Activated naive CD4-positive, alpha-beta T cell treated with anti-CD3 and anti-CD28 coated beads for 36 hours (primary cell): ENCODE measurements at regions of chr11 and their contacts with region 1.

Region 1: DNA sequence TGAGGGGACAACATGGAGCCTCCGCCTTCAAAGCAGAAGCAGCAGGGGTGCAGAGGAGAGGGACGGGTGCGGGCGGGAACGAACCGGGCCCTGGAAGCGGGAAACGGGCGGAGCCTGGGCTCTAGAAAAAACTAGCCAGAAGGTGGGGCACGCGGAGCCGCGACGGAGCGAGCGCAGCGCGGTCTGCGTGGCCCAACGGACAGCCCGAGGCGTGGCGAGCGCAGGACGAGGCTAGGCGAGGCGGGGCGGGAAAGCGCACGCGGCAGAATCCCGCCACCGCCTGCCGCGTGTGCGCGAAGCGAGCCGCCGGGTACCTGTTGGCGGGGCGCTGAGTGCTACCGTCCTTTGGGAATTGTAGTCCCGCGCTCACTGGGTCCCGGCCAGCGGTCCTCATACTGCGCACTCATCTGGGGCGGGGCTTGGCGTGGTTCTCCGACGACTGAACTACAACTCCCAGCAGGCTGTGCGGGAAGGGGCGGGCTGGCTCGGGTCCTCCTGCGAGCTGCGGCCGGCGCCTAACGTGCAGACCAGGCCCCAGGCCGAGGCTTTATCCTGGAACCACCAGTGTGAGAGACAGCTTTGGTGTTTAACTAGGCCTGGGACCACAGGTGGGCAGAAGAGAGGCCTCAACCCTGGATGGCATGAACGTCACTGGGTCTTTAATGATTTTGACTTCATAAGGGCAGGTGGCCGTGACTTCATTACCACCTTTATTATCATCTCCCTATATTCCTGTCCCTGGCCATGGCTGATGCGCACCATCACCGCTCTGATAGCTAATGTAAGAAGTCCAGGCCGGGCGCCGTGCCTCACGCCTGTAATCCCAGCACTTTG is at the start of gene ATL3:
- DNase-seq: peak; percentile 93
- H3K4me3 Mint-ChIP-seq: peak within 1 kb of the TSS; percentile 84
- H3K27ac Mint-ChIP-seq: peak within 1 kb of the TSS; percentile 83
- H3K4me1 Mint-ChIP-seq: peaks cover 39% of the 10 kb centered on the region
- H3K27me3 Mint-ChIP-seq: no peaks in the 10 kb centered on the region
- total RNA-seq, gene ATL3: 19.5 to 21.0 TPM

Region 2: DNA sequence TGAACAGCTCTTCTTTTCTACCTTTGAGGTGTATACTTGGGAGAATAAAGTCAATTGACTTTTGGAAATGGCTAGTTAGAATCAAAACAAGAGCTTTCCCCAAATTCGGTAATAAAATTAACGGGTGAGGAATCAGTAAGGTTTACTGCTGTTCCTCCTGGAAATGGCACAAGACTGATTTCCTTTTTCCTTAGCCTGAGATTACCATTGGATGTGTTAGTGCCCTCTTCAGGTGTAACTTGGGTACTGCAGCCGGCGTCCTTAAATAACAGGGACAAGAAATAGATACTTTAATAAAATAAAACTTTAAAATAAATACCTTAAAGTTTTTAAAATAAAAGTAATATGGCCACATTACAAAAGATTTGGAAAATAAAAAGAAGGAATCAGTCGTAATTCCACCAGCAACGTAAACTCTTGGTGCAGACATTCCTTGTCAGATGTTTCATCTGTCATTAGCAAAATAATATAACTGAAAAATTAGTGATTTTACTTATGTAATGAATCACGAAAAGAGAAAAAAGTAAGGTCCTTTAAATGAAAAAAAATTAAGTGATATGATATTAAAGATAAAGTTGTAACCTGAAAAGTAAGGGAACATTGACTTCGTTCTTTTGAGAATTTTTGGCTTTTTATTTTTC is 67.3 kb after region 1 on chr11:
- CTCF ChIA-PET with region 1: interaction called, 6 read pairs
- intact Hi-C with region 1: loop called (anchors 1 kb)
- DNase-seq: peak; percentile 86
- H3K4me3 Mint-ChIP-seq: no peak overlapping the region
- H3K27ac Mint-ChIP-seq: no peak overlapping the region
- H3K4me1 Mint-ChIP-seq: peaks cover 2% of the 10 kb centered on the region
- H3K27me3 Mint-ChIP-seq: no peaks in the 10 kb centered on the region

Region 3: DNA sequence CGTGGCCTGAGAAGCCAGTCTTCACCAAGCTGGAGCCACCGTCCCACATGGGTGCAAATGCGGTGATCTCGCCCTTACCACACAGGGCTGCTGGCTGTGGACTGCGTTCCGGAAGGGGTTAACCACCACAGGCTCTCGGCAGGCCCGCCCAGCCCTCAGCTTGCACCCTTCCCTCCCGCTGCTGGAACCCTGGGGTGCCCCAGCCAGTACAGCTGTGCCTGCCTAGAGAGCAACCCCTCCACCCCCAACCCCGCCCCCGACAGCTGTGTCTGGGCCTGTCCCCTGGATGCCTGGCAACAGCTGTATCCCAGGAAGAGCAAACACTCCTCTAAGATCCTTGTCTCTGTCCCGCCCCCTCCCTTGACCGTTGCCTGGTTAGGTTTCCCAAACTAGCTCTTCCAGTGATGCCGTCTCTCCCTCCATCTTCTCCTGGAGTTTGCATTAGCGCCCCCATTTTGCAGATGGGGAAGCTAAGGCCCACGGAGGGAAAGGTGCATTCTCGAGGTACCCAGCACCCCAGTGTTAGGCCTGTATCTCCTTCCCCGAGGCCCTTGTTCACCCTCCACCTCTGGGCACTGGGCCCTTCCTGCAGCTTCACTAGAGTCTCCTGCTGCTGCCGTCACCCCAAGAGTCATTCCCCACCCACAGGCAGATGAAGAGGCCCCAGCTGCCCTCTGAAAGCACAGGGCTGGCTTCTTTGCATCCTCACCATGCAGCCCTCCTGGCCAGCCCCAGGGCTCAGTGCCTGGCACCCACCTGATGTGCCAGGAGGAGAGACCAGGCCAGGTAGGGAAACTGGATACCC is 290.3 kb after region 1 on chr11:
- CTCF ChIA-PET with region 1: no interaction called
- intact Hi-C with region 1: no loop called
- DNase-seq: no peak
- H3K4me3 Mint-ChIP-seq: no peak overlapping the region
- H3K27ac Mint-ChIP-seq: no peak overlapping the region
- H3K4me1 Mint-ChIP-seq: peaks cover 3% of the 10 kb centered on the region
- H3K27me3 Mint-ChIP-seq: no peaks in the 10 kb centered on the region